ENCODE measurements at regions of chr1 and their contacts with region 1.

Region 1: DNA sequence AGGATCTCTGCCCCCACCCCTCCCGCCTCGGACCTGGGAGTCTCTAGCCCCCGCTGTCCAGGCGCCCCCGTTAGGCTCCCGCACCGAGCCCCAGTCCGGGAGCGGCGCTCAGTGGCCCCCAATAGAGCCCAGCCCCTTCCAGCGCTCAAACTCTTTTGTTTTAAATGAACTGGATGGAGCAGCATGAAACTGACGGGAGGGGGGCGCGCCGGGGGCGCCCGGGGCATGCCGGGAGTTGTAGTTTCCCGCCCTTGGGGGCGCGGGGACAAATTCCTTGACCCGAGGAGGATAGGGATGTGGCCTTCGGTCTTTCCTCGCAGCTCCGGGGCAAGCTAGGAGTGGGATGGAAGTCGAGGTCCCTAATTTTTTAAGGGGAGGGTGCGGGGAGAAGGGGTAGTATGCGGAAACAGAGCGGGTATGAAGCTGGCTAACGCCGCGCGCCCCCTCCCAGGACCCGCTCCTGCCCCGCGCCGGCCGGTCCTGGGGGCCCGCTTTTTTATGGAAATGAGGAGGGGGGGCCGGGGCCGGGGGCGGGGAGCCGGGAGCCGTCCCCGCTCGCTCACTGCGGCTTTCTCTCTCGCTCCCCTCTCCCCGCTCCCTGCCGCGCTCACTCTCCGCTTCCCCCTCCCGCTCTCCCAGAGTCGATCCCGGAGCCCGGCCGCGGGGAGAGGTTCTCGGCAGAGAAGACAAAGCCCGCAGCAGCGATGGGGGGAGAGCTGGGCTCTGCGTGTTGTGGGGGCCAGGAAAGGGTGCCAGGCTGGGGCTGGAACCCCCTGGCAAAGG is at the start of gene MEX3A:
- H3K4me3 Mint-ChIP-seq: peak within 1 kb of the TSS; percentile 96
- H3K27ac Mint-ChIP-seq: peak within 1 kb of the TSS; percentile 94
- H3K4me1 Mint-ChIP-seq: peaks cover 46% of the 10 kb centered on the region
- H3K27me3 Mint-ChIP-seq: peaks cover 77% of the 10 kb centered on the region

Region 2: DNA sequence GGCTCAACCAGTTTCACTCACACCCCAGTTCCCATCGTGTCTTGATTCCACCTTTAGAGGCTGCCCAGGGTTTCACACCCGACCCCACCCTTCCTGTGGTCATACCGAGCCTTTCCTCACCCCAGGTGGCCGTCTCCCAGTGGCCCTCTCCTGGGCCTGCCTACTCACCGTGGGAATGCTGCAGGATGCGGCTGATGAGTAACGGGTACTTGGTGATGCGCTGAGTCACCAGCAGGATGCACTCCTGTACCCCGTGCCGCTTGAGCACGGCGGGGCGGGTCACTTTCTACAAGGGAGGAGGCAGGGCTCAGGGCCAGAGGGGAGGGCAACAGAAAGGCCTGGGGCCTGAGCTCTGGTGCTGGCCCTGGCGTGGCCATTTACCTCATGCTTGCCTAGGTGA is 120.6 kb before region 1 on chr1:
- intact Hi-C with region 1: no loop called
- H3K4me3 Mint-ChIP-seq: no peak overlapping the region
- H3K27ac Mint-ChIP-seq: peak overlapping the region; percentile 69
- H3K4me1 Mint-ChIP-seq: peaks cover 67% of the 10 kb centered on the region
- H3K27me3 Mint-ChIP-seq: no peaks in the 10 kb centered on the region

Region 3: DNA sequence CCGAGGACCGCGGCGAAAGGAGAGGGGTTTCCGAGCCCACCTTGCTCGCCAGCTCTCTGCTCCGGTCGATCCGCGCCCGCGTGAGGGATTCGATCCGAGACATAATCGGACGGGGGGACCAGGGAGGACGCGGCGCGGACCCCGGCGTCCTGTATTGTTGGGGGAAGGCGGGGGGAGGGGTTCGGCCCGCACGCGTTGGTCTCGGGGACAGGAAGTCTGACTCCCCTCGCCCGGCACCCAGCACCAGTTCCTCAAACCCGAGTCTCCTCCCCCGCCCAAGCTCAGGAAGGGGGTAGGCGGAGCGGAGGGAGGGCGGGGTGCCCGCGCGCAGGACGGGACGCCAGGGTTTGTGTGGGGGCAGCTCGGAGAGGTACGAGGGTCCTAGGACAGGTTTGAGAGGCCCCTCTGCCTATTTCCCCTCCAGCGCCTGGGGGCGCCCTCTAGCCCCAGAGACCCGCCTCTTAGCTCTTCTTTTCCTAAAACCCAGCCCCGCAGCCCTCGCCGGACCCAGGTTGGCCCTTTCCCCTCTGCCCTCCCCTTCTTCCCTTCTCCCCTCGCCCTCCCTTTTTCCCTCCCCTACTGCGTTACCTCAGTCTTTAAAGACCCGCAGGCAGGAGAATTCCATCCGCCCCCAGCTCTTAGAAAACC is 104.1 kb before region 1 on chr1 and contains the start of gene ARHGEF2:
- intact Hi-C with region 1: loop called (anchors 5 kb)
- H3K4me3 Mint-ChIP-seq: peak within 1 kb of the TSS; percentile 86
- H3K27ac Mint-ChIP-seq: peak within 1 kb of the TSS; percentile 93
- H3K4me1 Mint-ChIP-seq: peaks cover 87% of the 10 kb centered on the region
- H3K27me3 Mint-ChIP-seq: no peaks in the 10 kb centered on the region

Region 4: GRCh38 chr1:156025877-156026276 is 56.6 kb before region 1 on chr1:
- intact Hi-C with region 1: no loop called
- H3K4me3 Mint-ChIP-seq: no peak overlapping the region
- H3K27ac Mint-ChIP-seq: no peak overlapping the region
- H3K4me1 Mint-ChIP-seq: peaks cover 10% of the 10 kb centered on the region
- H3K27me3 Mint-ChIP-seq: peaks cover 31% of the 10 kb centered on the region

Region 5: GRCh38 chr1:156129706-156130581 is 47.4 kb after region 1 on chr1:
- intact Hi-C with region 1: no loop called
- H3K4me3 Mint-ChIP-seq: peak overlapping the region; percentile 7
- H3K27ac Mint-ChIP-seq: peak overlapping the region; percentile 95
- H3K4me1 Mint-ChIP-seq: peaks cover 55% of the 10 kb centered on the region
- H3K27me3 Mint-ChIP-seq: peaks cover 38% of the 10 kb centered on the region